ENCODE measurements at regions of chr4 and their contacts with region 1.

Region 1: GRCh38 chr4:113502476-113502875 is 259.1 kb downstream of the CAMK2D start:
- DNase-seq: no peak
- ATAC-seq: no peak
- H3K4me3 ChIP-seq: no peak overlapping the region
- H3K4me3 Mint-ChIP-seq: no peak overlapping the region
- H3K27ac ChIP-seq: no peak overlapping the region
- H3K27ac Mint-ChIP-seq: no peak overlapping the region
- H3K4me1 ChIP-seq: no peaks in the 10 kb centered on the region
- H3K4me1 Mint-ChIP-seq: no peaks in the 10 kb centered on the region
- H3K27me3 ChIP-seq: no peaks in the 10 kb centered on the region
- H3K27me3 Mint-ChIP-seq: no peaks in the 10 kb centered on the region
- CTCF ChIP-seq: no peak

Region 2: DNA sequence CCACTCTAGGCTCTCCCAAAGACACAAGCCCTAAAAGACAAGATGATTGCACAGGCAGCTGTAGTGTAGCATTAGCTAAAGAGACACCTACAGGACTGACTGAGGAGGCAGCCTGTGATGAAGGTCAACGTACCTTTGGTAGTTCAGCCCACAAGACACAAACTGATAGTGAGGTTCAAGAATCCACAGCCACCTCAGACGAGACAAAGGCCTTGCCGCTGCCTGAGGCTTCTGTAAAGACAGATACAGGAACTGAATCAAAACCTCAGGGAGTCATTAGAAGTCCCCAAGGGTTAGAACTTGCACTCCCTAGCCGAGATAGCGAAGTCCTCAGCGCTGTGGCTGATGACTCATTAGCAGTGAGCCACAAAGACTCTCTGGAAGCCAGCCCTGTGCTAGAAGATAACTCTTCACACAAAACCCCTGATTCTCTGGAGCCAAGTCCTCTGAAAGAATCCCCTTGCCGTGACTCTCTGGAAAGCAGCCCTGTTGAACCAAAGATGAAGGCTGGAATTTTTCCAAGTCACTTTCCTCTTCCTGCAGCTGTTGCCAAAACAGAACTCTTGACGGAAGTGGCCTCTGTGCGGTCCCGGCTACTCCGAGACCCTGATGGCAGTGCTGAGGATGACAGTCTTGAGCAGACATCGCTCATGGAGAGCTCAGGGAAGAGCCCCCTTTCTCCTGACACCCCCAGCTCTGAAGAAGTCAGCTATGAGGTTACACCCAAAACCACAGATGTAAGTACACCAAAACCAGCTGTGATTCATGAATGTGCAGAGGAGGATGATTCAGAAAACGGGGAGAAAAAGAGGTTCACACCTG is 146.7 kb before region 1 on chr4:
- CTCF ChIA-PET with region 1: no interaction called
- POLR2A ChIA-PET with region 1: no interaction called
- intact Hi-C with region 1: no loop called
- DNase-seq: peak; percentile 48
- ATAC-seq: peak; percentile 97
- H3K4me3 ChIP-seq: no peak overlapping the region
- H3K4me3 Mint-ChIP-seq: peak overlapping the region; percentile 9
- H3K27ac ChIP-seq: no peak overlapping the region
- H3K27ac Mint-ChIP-seq: no peak overlapping the region
- H3K4me1 ChIP-seq: peaks cover 6 to 10% of the 10 kb centered on the region in 2 donors
- H3K4me1 Mint-ChIP-seq: peaks cover 13% of the 10 kb centered on the region
- H3K27me3 ChIP-seq: peaks cover 0 to 24% (median 11%) of the 10 kb centered on the region in 4 experiments
- H3K27me3 Mint-ChIP-seq: peaks cover 72% of the 10 kb centered on the region
- CTCF ChIP-seq: no peak

Region 3: GRCh38 chr4:113513382-113513781 is 10.9 kb after region 1 on chr4:
- CTCF ChIA-PET with region 1: no interaction called
- POLR2A ChIA-PET with region 1: no interaction called
- intact Hi-C with region 1: loop called (anchors 1 kb)
- DNase-seq: no peak
- ATAC-seq: no peak
- H3K4me3 ChIP-seq: no peak overlapping the region
- H3K4me3 Mint-ChIP-seq: no peak overlapping the region
- H3K27ac ChIP-seq: no peak overlapping the region
- H3K27ac Mint-ChIP-seq: no peak overlapping the region
- H3K4me1 ChIP-seq: no peaks in the 10 kb centered on the region
- H3K4me1 Mint-ChIP-seq: no peaks in the 10 kb centered on the region
- H3K27me3 ChIP-seq: no peaks in the 10 kb centered on the region
- H3K27me3 Mint-ChIP-seq: no peaks in the 10 kb centered on the region
- CTCF ChIP-seq: no peak